HAP-1 (cell line): ENCODE measurements at regions of chr18 and their contacts with region 1.

Region 1: DNA sequence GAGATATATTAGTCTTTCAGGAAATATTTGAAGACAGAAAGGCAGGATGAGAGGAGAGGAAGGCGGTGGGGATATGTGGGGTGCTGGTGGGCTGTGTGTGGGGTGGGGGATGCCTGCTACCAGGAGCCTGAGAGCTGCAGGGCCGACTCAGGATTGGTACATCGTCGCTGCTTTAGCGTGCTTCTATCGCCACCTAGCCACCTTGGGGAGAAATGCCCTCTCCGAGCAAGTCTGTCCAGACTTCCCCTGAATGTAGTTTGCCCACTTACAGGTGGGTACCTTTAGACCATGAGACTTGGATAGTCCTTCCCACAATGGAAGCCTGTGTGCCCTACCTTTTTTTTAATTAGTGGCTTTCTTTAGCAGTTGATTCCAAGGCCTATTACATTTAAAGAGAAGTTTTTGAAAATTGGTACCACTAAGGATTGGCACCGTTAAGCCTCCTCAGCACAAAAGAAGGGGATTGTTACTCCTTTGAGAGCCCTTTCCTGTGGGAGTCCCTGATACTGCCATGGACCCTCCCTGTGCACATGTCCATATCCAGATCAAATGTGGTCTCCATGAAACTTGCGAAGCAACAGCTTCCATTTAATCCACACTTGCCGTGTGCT is 114.1 kb upstream of the NDUFV2 start:
- DNase-seq: peak; percentile 63 to 76
- H3K4me3 ChIP-seq: no peak overlapping the region
- H3K4me1 ChIP-seq: no peaks in the 10 kb centered on the region
- H3K27me3 ChIP-seq: no peaks in the 10 kb centered on the region

Region 2: GRCh38 chr18:8478166-8478967 is 510.0 kb before region 1 on chr18:
- in situ Hi-C with region 1: loop called (anchors 10 kb)
- DNase-seq: peak; percentile 34 to 88
- H3K4me3 ChIP-seq: no peak overlapping the region
- H3K4me1 ChIP-seq: no peaks in the 10 kb centered on the region
- H3K27me3 ChIP-seq: no peaks in the 10 kb centered on the region

Region 3: GRCh38 chr18:8661754-8662569 is 326.4 kb before region 1 on chr18:
- in situ Hi-C with region 1: loop called (anchors 10 kb)
- DNase-seq: peak; percentile 81 to 84
- H3K4me3 ChIP-seq: no peak overlapping the region
- H3K4me1 ChIP-seq: peaks cover 18% of the 10 kb centered on the region
- H3K27me3 ChIP-seq: no peaks in the 10 kb centered on the region

Region 4: GRCh38 chr18:8704361-8705279 is 283.7 kb before region 1 on chr18:
- in situ Hi-C with region 1: loop called (anchors 5 kb)
- DNase-seq: peak; percentile 77 to 93
- H3K4me3 ChIP-seq: peak overlapping the region; percentile 36
- H3K4me1 ChIP-seq: peaks cover 15% of the 10 kb centered on the region
- H3K27me3 ChIP-seq: no peaks in the 10 kb centered on the region

Region 5: DNA sequence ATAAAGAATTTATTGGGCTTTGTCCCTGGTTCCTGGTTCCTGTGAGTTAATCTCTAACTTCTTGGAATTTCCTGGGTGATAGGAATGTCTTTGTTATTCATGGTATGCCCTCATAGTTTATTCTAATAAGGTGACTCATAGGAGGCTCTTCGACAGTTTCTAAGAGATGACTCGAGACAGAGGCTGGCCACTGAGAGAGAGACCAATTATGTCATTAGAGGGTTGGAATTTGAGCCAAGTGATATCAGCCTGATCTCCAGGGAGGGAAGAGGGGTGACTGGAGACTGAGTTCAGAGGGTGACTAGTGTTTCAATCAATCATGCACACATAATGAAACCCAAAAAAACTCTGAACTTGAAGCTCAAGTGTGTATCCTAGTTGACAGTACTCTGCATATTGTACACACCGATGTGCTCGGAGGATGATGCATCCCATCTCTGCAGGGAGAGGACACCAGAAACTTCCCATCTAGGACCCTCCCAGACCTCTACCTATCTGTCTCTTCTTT is 97.4 kb before region 1 on chr18:
- in situ Hi-C with region 1: no loop called
- DNase-seq: peak; percentile 73 to 94
- H3K4me3 ChIP-seq: no peak overlapping the region
- H3K4me1 ChIP-seq: peaks cover 12% of the 10 kb centered on the region
- H3K27me3 ChIP-seq: no peaks in the 10 kb centered on the region